ENCODE measurements at regions of chr17 and their contacts with region 1.

Region 1: GRCh38 chr17:19024101-19025078 is 19.8 kb upstream of the FAM83G start:
- DNase-seq: no peak
- ATAC-seq: no peak
- H3K4me3 ChIP-seq: no peak overlapping the region
- H3K27ac ChIP-seq: no peak overlapping the region
- H3K4me1 ChIP-seq: no peaks in the 10 kb centered on the region
- H3K27me3 ChIP-seq: no peaks in the 10 kb centered on the region
- CTCF ChIP-seq: no peak

Region 2: DNA sequence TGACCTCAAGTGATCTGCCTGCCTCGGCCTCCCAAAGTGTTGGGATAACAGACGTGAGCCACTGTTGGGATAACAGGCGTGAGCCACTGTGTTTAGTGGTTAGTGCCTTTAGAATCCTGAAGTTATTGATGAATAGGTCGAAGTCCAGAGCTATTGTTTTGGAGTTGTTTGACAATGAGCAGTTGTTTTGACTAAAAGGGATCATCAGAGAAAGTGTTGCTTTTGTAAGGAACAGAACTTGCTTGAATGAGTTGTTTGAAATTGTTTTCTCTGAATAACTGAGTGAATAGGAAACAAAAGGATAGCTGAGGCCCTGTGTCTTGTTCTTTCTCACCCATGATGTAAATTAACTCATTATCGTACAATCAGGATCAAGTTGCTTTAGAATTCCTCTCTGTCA is 119.9 kb before region 1 on chr17:
- intact Hi-C with region 1: no loop called
- DNase-seq: no peak
- ATAC-seq: no peak
- H3K4me3 ChIP-seq: no peak overlapping the region
- H3K27ac ChIP-seq: no peak overlapping the region
- H3K4me1 ChIP-seq: peaks cover 0 to 20% (median 0%) of the 10 kb centered on the region in 9 donors
- H3K27me3 ChIP-seq: no peaks in the 10 kb centered on the region
- CTCF ChIP-seq: no peak

Region 3: DNA sequence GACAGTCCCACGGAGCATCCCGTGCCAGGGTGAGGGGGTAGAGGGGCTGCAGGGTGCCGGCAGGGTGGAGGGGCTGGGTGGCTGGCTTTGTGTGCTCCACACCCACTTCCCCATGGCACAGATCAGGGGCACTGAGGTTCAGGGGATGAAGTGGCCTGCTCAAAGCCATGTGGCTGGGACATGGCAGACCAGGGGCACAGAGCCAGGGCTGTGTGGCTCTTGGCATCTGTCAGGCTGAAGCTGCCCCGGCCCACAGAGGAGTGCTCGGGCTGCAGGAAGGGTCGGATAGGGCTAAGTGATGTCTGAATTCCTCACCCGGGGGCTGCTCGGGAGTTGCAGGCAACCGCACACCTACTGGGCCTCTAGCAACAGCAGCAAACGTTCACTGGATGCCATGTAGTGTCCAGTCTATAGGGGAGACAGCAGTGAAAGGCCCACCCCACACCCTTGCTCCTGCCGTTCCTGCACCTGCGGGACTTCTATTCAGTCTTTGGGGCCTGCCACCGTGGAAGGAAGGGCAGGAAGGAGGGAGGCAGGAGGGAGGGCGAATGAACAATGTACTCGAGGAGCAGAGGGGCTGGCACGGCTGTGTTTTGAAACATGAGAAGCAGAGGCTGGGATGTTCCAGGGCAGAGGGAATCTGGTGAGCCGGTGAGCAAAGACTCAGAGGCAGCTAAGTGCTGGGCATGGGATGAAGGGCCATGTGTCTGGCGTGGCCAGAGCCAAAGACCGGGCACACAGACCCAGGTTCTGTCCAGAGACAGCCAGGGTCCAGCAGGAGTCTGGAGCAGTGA is 57.4 kb before region 1 on chr17:
- intact Hi-C with region 1: loop called in 2 of 10 experiments (anchors 5 to 10 kb)
- DNase-seq: peak in 1 of 2 donors; percentile 33
- ATAC-seq: peak in 5 of 8 donors; percentile 30 to 64 (median 46)
- H3K4me3 ChIP-seq: no peak overlapping the region
- H3K27ac ChIP-seq: no peak overlapping the region
- H3K4me1 ChIP-seq: peaks cover 0 to 7% (median 0%) of the 10 kb centered on the region in 9 donors
- H3K27me3 ChIP-seq: no peaks in the 10 kb centered on the region
- CTCF ChIP-seq: no peak

Region 4: DNA sequence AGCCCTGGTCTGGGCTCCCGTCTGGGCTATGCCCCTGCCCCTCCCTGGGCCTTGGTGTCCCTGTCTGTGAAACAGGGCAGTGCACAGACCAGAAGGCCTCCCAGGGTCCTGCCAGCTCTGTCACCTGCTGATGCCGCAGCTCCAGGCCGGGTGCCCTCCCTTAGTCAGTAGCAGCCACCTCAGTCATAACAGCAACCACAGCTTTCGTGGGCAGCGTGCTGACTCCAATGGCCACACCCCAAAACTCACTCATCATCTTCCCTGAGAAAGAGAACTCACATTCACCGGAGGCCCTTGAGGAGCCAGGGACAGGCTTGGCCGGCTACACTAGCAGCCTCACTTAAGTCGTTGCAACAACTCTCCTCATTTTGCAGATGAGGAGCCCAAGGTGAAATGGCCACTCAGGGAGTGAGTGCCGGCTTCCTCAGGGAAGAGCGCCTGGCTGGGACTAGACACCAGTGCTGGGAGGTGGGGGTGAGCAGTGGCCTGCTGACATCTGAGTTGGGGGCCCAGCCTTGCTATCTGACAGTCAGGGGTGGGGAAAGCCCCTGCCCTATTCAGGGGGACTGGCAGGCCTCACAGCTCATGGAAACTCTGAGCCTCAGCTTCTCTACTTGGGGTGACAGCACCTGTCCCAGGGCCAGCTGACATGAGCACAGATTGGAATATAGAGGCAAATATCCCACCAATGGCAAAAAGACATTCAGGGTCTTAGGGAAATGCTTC is 49.8 kb before region 1 on chr17:
- intact Hi-C with region 1: loop called in 2 of 10 experiments (anchors 5 to 10 kb)
- DNase-seq: no peak
- ATAC-seq: no peak
- H3K4me3 ChIP-seq: no peak overlapping the region
- H3K27ac ChIP-seq: no peak overlapping the region
- H3K4me1 ChIP-seq: no peaks in the 10 kb centered on the region
- H3K27me3 ChIP-seq: no peaks in the 10 kb centered on the region
- CTCF ChIP-seq: no peak

Region 5: DNA sequence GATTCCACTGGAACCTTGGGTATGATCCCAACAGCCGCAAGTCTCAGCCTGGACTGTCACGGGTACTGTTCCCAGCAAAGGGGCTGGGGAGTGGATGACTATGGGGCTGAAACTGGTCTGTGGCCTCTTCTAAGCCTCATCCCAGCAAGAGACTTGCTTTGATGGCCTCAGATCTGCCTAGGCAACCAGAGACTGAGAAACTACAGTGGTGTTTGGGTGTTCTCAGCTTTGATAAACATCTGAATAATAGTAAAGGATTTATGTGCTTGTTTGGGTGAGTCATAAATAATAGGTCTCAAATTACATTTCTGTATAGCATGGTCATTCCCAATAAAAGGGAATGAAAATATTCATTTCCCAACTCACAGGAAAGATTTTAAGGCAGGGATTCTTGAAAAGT is 873.5 kb after region 1 on chr17:
- intact Hi-C with region 1: no loop called
- DNase-seq: no peak
- ATAC-seq: peak in 1 of 8 donors; percentile 21
- H3K4me3 ChIP-seq: no peak overlapping the region
- H3K27ac ChIP-seq: no peak overlapping the region
- H3K4me1 ChIP-seq: peaks cover 0 to 9% (median 0%) of the 10 kb centered on the region in 9 donors
- H3K27me3 ChIP-seq: no peaks in the 10 kb centered on the region
- CTCF ChIP-seq: no peak

Measured in heart right ventricle (tissue), 16 donors.